CD4-positive, alpha-beta memory T cell (primary cell): ENCODE measurements at regions of chr21 and their contacts with region 1.

Region 1: GRCh38 chr21:33441489-33442477 is 38.0 kb downstream of the TMEM50B start:
- DNase-seq: no peak
- H3K4me3 ChIP-seq: no peak overlapping the region
- H3K4me3 Mint-ChIP-seq: no peak overlapping the region
- H3K27ac ChIP-seq: no peak overlapping the region
- H3K27ac Mint-ChIP-seq: peak overlapping the region in 4 of 7 donors; percentile 14 to 53 (median 30)
- H3K4me1 ChIP-seq: no peaks in the 10 kb centered on the region
- H3K4me1 Mint-ChIP-seq: peaks cover 5 to 9% (median 7%) of the 10 kb centered on the region in 4 donors
- H3K27me3 ChIP-seq: no peaks in the 10 kb centered on the region
- H3K27me3 Mint-ChIP-seq: no peaks in the 10 kb centered on the region

Region 2: GRCh38 chr21:32826329-32827167 is 615.2 kb before region 1 on chr21:
- CTCF ChIA-PET with region 1: interaction called, 15 read pairs
- POLR2A ChIA-PET with region 1: interaction called, 3 read pairs
- intact Hi-C with region 1: loop called (anchors 5 kb)
- DNase-seq: peak in 4 of 5 donors; percentile 23 to 38 (median 29)
- H3K4me3 ChIP-seq: no peak overlapping the region
- H3K4me3 Mint-ChIP-seq: no peak overlapping the region
- H3K27ac ChIP-seq: no peak overlapping the region
- H3K27ac Mint-ChIP-seq: no peak overlapping the region
- H3K4me1 ChIP-seq: no peaks in the 10 kb centered on the region
- H3K4me1 Mint-ChIP-seq: no peaks in the 10 kb centered on the region
- H3K27me3 ChIP-seq: no peaks in the 10 kb centered on the region
- H3K27me3 Mint-ChIP-seq: peaks cover 3% of the 10 kb centered on the region in 2 donors

Region 3: DNA sequence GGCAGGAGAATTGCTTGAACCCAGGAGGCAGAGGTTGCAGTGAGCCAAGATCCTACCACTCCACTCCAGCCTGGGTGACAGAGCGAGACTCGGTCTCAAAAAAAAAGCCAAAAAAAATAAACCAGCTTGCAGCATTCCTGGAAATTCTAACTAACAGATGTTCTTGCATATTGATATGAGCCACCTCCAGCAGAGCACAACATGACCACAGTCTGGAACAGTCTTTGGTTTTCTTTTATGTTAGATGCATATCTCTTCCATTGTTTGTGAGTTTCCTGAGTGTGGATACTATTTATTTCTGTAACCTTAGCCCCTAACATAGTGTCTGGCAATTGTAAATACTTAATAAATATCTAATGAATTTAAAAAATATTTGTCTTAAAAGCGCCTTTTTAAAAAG is 93.1 kb before region 1 on chr21:
- CTCF ChIA-PET with region 1: interaction called, 27 read pairs
- POLR2A ChIA-PET with region 1: no interaction called
- intact Hi-C with region 1: no loop called
- DNase-seq: no peak
- H3K4me3 ChIP-seq: no peak overlapping the region
- H3K4me3 Mint-ChIP-seq: no peak overlapping the region
- H3K27ac ChIP-seq: no peak overlapping the region
- H3K27ac Mint-ChIP-seq: peak overlapping the region in 1 of 7 donors; percentile 52
- H3K4me1 ChIP-seq: peaks cover 15% of the 10 kb centered on the region
- H3K4me1 Mint-ChIP-seq: peaks cover 8 to 24% (median 14%) of the 10 kb centered on the region in 4 donors
- H3K27me3 ChIP-seq: no peaks in the 10 kb centered on the region
- H3K27me3 Mint-ChIP-seq: no peaks in the 10 kb centered on the region

Region 4: GRCh38 chr21:33374450-33375096 is 67.2 kb before region 1 on chr21:
- CTCF ChIA-PET with region 1: interaction called, 24 read pairs
- POLR2A ChIA-PET with region 1: no interaction called
- intact Hi-C with region 1: loop called (anchors 1 kb)
- DNase-seq: peak in 4 of 5 donors; percentile 52 to 55 (median 54)
- H3K4me3 ChIP-seq: no peak overlapping the region
- H3K4me3 Mint-ChIP-seq: no peak overlapping the region
- H3K27ac ChIP-seq: no peak overlapping the region
- H3K27ac Mint-ChIP-seq: peak overlapping the region in 1 of 7 donors; percentile 51
- H3K4me1 ChIP-seq: peaks cover 13% of the 10 kb centered on the region
- H3K4me1 Mint-ChIP-seq: peaks cover 7 to 21% (median 10%) of the 10 kb centered on the region in 4 donors
- H3K27me3 ChIP-seq: no peaks in the 10 kb centered on the region
- H3K27me3 Mint-ChIP-seq: no peaks in the 10 kb centered on the region

Region 5: DNA sequence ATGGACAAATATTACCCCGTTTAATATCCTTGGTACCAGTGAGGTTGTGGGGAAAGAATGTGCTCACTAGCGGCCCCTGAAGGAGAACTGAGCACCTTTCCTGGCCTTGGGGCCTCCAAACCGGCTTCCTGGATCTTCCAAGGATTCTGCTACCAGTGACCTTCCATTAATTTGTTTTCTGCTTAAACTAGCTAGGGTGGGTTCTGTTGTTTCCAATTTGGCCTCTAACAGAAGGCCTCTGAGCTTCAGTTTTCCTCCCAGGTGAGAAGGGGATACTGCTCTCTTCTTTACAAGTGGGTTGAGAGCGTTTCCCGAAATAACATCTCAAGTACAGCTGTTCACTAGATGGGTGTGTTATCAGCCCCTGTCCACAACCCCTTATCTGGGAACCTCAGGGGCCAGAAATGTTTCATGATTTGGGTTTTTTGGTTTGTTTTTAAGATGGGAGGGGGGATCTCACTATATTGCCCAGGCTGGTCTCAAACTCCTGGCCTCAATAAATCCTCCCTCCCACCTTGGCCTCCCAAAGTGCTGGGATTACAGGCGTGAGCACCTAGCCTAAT is 55.5 kb before region 1 on chr21:
- CTCF ChIA-PET with region 1: interaction called, 16 read pairs
- POLR2A ChIA-PET with region 1: interaction called, 6 read pairs
- intact Hi-C with region 1: no loop called
- DNase-seq: no peak
- H3K4me3 ChIP-seq: no peak overlapping the region
- H3K4me3 Mint-ChIP-seq: no peak overlapping the region
- H3K27ac ChIP-seq: no peak overlapping the region
- H3K27ac Mint-ChIP-seq: no peak overlapping the region
- H3K4me1 ChIP-seq: peaks cover 44% of the 10 kb centered on the region
- H3K4me1 Mint-ChIP-seq: peaks cover 33 to 50% (median 43%) of the 10 kb centered on the region in 4 donors
- H3K27me3 ChIP-seq: no peaks in the 10 kb centered on the region
- H3K27me3 Mint-ChIP-seq: peaks cover 0 to 3% of the 10 kb centered on the region in 2 donors

Region 6: DNA sequence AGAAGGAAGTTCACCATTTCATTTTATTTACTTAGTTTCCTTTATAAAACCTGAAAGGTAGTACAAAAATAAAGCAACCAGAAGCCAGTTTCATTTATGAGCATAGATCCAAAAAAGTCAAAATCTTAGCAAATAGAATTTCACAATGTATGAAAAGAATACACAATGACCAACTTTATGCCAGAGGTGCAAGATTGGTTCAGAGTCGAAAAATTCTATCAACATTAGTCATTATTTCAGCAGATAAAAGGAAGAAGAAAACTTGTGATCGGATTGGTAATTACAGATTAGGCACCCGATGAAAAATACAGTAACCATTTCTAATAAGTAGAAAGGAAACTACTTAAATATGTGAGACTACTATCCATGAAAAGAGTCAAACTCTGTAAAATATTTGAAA is 289.7 kb after region 1 on chr21:
- CTCF ChIA-PET with region 1: no interaction called
- POLR2A ChIA-PET with region 1: no interaction called
- intact Hi-C with region 1: no loop called
- DNase-seq: no peak
- H3K4me3 ChIP-seq: no peak overlapping the region
- H3K4me3 Mint-ChIP-seq: no peak overlapping the region
- H3K27ac ChIP-seq: no peak overlapping the region
- H3K27ac Mint-ChIP-seq: no peak overlapping the region
- H3K4me1 ChIP-seq: no peaks in the 10 kb centered on the region
- H3K4me1 Mint-ChIP-seq: no peaks in the 10 kb centered on the region
- H3K27me3 ChIP-seq: no peaks in the 10 kb centered on the region
- H3K27me3 Mint-ChIP-seq: peaks cover 3% of the 10 kb centered on the region in 2 donors